ENCODE measurements at regions of chr5 and their contacts with region 1.

Region 1: GRCh38 chr5:13763719-13764118 is 180.8 kb downstream of the DNAH5 start:
- DNase-seq: no peak
- H3K4me3 ChIP-seq: no peak overlapping the region
- CTCF ChIP-seq: no peak
- POLR2A ChIP-seq: no peak

Region 2: GRCh38 chr5:12399868-12400267 is 1363.9 kb before region 1 on chr5:
- intact Hi-C with region 1: no loop called
- DNase-seq: no peak
- H3K4me3 ChIP-seq: no peak overlapping the region
- CTCF ChIP-seq: no peak
- POLR2A ChIP-seq: no peak

Region 3: GRCh38 chr5:13804336-13804735 is 40.6 kb after region 1 on chr5:
- intact Hi-C with region 1: loop called (anchors 2 kb)
- DNase-seq: no peak
- H3K4me3 ChIP-seq: no peak overlapping the region
- CTCF ChIP-seq: no peak
- POLR2A ChIP-seq: no peak

Region 4: DNA sequence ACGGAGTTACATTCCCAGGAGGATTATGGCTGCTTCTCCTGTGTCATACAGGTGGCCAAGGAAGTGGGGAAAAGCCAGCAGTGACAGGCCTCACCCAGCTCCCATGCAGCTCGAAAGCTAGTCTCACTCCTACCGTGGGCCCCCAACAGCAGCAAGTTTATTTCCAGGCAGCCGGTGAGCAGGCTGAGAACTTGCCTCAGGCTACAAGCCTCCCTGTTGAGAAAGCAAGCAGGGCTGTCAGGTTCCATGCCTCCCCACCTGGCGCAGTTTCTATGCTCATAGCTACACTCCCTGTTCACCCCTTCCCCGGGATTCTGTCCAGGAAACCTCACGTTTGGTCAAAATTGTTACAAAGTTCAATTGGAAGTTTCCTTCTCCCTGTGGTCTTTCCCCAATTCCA is 208.3 kb after region 1 on chr5:
- intact Hi-C with region 1: no loop called
- DNase-seq: no peak
- H3K4me3 ChIP-seq: no peak overlapping the region
- CTCF ChIP-seq: no peak
- POLR2A ChIP-seq: no peak

Measured in lower leg skin (tissue), 4 donors.